Heart right ventricle (tissue), 16 donors: ENCODE measurements at regions of chr22 and their contacts with region 1.

Region 1: GRCh38 chr22:44574065-44574464 is 76.0 kb upstream of the RTL6 start:
- DNase-seq: no peak
- ATAC-seq: peak in 6 of 8 donors; percentile 32 to 82 (median 66)
- H3K4me3 ChIP-seq: no peak overlapping the region
- H3K27ac ChIP-seq: no peak overlapping the region
- H3K4me1 ChIP-seq: peaks cover 0 to 25% (median 4%) of the 10 kb centered on the region in 9 donors
- H3K27me3 ChIP-seq: peaks cover 0 to 19% (median 0%) of the 10 kb centered on the region in 7 donors
- CTCF ChIP-seq: no peak

Region 2: DNA sequence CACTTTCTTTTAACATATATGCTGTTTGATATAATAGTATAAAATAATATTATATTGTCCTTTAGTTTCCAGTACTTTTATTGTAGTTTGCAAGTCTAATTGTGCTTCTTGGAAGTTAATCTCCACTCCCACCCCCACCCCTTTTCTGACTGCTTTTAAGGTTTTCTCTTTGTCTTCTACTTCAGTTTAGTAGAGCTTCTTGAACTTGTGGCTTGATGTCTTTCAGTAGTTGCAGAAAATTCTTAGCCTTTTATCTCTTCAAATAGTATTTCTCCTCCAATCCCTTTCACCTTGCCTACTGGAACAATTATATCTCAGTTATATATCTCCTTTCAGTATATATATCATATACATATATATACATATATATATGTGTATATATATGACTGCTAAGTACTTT is 336.8 kb before region 1 on chr22:
- intact Hi-C with region 1: loop called in 1 of 10 experiments (anchors 5 kb)
- DNase-seq: no peak
- ATAC-seq: no peak
- H3K4me3 ChIP-seq: no peak overlapping the region
- H3K27ac ChIP-seq: no peak overlapping the region
- H3K4me1 ChIP-seq: no peaks in the 10 kb centered on the region
- H3K27me3 ChIP-seq: peaks cover 0 to 5% (median 0%) of the 10 kb centered on the region in 7 donors
- CTCF ChIP-seq: no peak